OCI-LY7 (cell line): ENCODE measurements at regions of chr10 and their contacts with region 1.

Region 1: DNA sequence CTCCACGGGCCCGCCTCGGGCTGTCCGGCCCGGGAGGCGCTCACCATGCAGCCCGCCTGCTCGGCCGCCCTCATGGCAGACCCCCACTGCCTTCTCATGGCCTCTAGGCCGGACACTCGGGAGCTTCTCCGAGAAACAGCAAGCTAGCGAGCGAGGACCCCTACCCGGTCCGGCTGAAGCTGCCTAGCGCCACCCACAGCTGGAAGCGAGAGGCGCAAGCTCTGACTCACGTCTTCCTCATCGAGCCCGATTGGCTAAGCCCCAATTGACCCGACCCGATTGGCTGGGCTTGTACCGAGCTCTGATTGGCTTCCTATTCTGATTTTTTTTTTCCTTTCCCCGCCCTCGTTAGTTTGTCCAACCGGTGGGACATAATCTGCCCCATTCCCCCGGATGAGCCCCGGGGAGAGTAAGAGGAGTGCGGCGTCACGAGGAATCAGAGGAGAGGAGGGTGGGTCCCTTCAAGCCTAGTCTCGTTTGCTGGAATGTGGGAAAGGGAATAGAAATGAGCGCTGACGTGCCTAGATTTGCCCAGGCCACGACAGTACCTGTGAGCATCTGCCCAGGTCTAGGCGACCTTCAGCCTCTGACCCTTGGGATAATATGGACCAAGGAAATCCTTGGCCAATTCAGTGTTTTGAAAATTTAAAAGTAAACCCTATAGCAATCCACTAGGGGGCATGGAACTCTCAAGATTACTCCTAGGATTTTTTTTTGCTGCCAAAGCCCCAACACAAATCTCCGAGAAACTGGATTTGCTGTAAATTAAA is at the start of gene TYSND1:
- DNase-seq: peak; percentile 99
- H3K4me3 ChIP-seq: peak within 1 kb of the TSS; percentile 76
- H3K27ac ChIP-seq: peak within 1 kb of the TSS; percentile 78
- H3K4me1 ChIP-seq: peaks cover 17% of the 10 kb centered on the region
- CTCF ChIP-seq: peak; percentile 84
- total RNA-seq, gene TYSND1: 32.5 and 33.4 TPM in 2 replicates

Region 2: GRCh38 chr10:70115948-70116682 is 30.6 kb before region 1 on chr10:
- CTCF ChIA-PET with region 1: interaction called, 10 read pairs
- POLR2A ChIA-PET with region 1: interaction called, 4 read pairs
- intact Hi-C with region 1: no loop called
- DNase-seq: peak; percentile 71
- H3K4me3 ChIP-seq: no peak overlapping the region
- H3K27ac ChIP-seq: no peak overlapping the region
- H3K4me1 ChIP-seq: no peaks in the 10 kb centered on the region
- CTCF ChIP-seq: peak; percentile 95

Region 3: DNA sequence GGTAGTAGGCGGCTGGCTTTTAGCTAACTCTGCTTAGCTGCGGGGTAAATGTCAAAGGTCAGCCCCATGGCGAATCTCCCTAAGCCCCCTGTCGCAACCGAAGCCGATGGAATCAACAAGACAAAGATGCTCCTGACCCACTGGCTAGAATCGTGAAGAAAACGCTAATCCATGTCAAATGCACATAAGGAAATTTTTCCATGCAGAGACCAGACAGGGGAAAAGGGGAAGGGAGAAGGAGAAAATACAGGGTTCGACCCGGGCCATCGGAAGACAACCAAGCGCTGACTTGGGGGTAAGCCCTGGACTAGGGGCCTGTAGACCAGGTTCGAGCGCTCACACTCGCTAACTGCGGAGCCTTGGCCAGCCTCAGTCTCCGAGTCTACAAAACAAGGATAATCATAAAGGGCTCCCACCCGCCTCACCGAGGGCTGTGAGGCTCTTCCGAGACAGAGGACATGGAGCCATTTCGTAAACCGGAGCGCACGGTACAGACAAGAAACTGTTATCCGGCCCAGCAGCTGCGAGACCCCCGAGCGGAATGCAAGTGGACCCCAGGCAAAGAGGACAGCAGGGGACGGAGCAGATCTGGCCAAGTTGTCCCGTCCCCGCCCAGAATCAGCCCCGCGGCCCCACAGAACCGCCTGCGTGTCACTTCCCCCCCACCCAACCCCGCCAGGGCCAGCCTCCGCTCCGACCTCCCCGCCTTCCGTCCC is 23.1 kb after region 1 on chr10:
- CTCF ChIA-PET with region 1: interaction called, 6 read pairs
- POLR2A ChIA-PET with region 1: interaction called, 12 read pairs
- intact Hi-C with region 1: loop called (anchors 1 kb)
- DNase-seq: peak; percentile 37
- H3K4me3 ChIP-seq: peak overlapping the region; percentile 94
- H3K27ac ChIP-seq: no peak overlapping the region
- H3K4me1 ChIP-seq: peaks cover 40% of the 10 kb centered on the region
- CTCF ChIP-seq: no peak